SK-N-SH (cell line): ENCODE measurements at regions of chr3 and their contacts with region 1.

Region 1: GRCh38 chr3:141452036-141452435 is 34.8 kb upstream of the RASA2 start:
- DNase-seq: no peak
- H3K4me3 ChIP-seq: no peak overlapping the region
- H3K27ac ChIP-seq: no peak overlapping the region
- H3K4me1 ChIP-seq: peaks cover 4 to 16% of the 10 kb centered on the region in 2 experiments; a peak in 2 of 4 replicates
- H3K27me3 ChIP-seq: no peaks in the 10 kb centered on the region
- CTCF ChIP-seq: peak; percentile 80
- EP300 ChIP-seq: no peak
- RAD21 ChIP-seq: peak; percentile 84

Region 2: GRCh38 chr3:141212555-141212954 is 239.5 kb before region 1 on chr3:
- CTCF ChIA-PET with region 1: no interaction called
- POLR2A ChIA-PET with region 1: no interaction called
- DNase-seq: no peak
- H3K4me3 ChIP-seq: no peak overlapping the region
- H3K27ac ChIP-seq: no peak overlapping the region
- H3K4me1 ChIP-seq: no peaks in the 10 kb centered on the region
- H3K27me3 ChIP-seq: no peaks in the 10 kb centered on the region
- CTCF ChIP-seq: no peak
- EP300 ChIP-seq: no peak
- RAD21 ChIP-seq: no peak

Region 3: DNA sequence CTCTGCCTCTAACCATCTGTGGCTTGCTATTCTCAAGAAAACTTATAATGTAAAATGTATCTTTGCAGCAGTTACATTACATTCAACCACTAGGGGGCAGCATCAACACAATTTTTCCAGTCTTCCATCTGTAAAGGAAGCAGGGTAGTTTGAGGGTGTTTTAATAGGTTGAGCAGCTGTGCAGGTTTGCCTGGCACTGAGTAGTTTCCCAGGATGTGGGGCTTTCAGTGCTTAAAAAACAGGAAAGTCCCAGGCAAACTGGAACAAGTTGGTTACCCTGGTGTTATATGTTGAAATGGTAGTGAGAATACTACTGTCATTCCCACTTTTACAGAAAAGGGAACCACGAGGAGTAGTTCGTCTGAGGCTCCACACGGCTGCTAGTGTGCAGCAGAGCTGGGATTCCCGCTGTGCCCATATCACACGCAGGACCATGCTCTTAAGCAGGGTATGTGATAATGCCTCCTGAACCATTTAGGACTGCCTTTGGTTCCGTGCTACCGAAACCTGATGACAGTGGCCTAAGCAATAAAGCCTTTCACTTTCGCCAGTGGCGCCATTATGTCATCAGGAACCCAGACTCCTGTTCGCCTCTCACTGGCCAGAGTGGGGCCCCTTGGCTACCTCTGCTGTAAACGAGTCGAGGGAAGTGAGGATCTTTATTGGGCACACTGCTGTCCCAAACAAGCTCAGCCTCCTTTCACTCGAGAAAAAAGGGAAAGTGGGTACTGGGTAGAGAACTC is 148.4 kb before region 1 on chr3:
- CTCF ChIA-PET with region 1: interaction called, 28 read pairs
- POLR2A ChIA-PET with region 1: no interaction called
- DNase-seq: peak; percentile 66
- H3K4me3 ChIP-seq: no peak overlapping the region; a peak in 1 of 4 replicates
- H3K27ac ChIP-seq: no peak overlapping the region
- H3K4me1 ChIP-seq: no peaks in the 10 kb centered on the region; a peak in 1 of 4 replicates
- H3K27me3 ChIP-seq: no peaks in the 10 kb centered on the region
- CTCF ChIP-seq: peak; percentile 89
- EP300 ChIP-seq: no peak
- RAD21 ChIP-seq: peak; percentile 75

Region 4: DNA sequence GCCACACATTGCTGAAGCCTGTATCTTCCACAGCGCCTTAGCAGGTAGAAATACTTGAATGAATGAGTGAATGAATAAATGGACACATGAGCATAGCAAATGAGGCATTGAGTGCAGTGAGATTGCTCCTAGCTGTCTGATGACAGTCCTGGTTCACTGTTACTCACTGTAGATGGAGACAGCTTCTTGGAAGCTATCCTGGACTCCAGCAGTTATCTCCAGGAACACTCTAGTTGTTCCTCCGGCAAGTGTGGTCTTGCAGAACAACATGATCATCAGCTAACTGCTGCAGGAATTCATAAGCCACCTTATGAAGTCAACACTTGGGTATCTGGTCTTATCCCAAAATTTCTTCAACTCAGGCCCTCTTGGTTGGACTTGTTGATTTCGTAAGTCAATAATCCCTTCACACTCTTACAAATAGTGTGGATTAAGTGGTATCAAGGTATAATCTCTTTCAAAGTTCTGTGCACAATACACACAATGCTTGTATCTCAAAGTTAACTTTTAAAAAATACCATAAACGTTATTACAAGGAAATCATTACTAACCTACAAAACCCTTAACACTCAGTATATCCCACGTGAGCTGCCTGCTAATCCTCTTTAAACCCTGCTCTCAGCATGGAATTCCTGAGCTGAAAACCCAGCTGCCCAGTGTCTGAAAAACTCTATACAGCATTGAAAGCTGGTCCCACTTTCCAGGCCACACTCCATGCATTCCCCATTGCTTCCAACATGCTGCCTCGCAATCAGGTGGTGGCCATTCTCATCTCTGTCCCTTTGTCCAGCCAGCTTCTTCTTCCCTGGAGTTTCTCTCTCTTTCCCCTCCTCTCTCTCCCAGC is 98.2 kb before region 1 on chr3:
- CTCF ChIA-PET with region 1: interaction called, 123 read pairs
- POLR2A ChIA-PET with region 1: no interaction called
- DNase-seq: no peak
- H3K4me3 ChIP-seq: no peak overlapping the region
- H3K27ac ChIP-seq: no peak overlapping the region
- H3K4me1 ChIP-seq: no peaks in the 10 kb centered on the region
- H3K27me3 ChIP-seq: no peaks in the 10 kb centered on the region
- CTCF ChIP-seq: no peak
- EP300 ChIP-seq: no peak
- RAD21 ChIP-seq: no peak

Region 5: DNA sequence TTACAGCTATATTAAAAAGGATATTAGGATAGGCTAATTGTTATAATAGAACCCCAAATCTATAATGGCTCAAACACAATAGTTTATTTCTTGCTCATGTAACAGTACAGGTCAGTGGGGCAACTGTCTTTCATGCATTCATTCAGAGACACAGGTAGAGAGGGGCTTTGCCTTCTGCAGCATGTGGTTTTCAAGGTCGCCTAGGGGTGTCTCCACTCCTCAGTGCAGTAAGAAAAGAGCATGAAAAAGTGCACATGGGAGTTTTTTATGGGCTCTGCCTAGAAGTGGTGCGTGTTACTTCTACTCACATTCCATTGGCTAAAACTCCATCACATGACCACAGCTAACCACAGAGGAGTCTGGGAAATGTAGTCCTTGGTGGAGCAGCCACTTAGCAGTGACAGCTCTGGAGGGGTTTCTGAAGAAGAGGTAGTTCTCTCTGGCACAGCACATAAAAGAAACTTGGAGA is 81.9 kb before region 1 on chr3:
- CTCF ChIA-PET with region 1: interaction called, 19 read pairs
- POLR2A ChIA-PET with region 1: no interaction called
- DNase-seq: peak; percentile 80
- H3K4me3 ChIP-seq: peak overlapping the region in 1 of 2 experiments; percentile 3; a peak in 1 of 4 replicates
- H3K27ac ChIP-seq: peak overlapping the region; percentile 40 to 99; a peak in 3 of 4 replicates
- H3K4me1 ChIP-seq: peaks cover 9 to 33% of the 10 kb centered on the region in 2 experiments
- H3K27me3 ChIP-seq: no peaks in the 10 kb centered on the region
- CTCF ChIP-seq: peak; percentile 52
- EP300 ChIP-seq: no peak
- RAD21 ChIP-seq: peak; percentile 66

Region 6: DNA sequence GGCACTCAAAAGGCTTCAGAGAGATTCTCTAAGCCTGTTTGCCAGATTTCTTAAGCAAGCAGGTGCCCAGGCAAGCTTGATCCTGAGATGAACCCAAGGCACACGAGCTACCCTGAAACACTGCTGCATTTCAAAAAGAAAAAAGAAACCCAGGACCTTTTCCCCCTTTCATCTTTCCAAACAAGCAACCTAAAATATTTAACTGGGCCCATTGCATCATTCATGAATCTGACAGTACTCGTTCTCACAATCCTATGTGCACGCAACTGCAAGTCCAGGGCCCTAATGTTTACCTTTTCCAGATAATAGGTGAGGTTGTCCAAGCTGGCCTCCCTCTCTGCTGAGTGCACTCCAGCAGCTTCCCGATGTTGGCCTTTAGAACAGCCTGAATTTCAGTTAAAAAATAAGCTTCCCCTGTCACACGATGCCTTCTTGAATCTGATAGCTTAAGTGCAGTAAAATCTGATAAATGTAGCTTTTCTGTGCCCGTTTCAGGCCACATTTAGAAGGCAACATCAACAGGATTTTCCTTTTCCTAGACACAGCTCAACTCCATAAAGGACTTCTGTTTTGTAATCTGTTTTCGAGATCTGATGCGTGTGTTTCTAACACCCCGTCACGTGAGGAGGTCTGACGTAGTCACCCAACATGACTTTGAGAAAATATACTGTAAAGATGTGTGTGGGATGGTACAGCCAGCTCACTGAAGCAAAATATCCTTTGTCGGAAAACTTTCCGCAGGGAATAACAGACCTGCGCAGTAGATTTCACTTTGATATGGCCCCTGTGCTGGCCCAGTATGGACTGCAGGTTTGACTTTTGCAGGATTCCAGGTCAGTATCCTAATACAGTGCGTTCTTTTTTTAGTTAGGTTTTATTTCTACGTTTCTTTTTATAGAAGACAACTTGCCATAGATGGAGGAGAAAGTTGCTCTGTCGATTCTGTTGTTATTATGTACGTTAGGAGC is 20.3 kb before region 1 on chr3:
- CTCF ChIA-PET with region 1: interaction called, 16 read pairs
- POLR2A ChIA-PET with region 1: no interaction called
- DNase-seq: no peak
- H3K4me3 ChIP-seq: no peak overlapping the region
- H3K27ac ChIP-seq: no peak overlapping the region
- H3K4me1 ChIP-seq: peaks cover 6 to 13% of the 10 kb centered on the region in 2 experiments; a peak in 1 of 4 replicates
- H3K27me3 ChIP-seq: no peaks in the 10 kb centered on the region
- CTCF ChIP-seq: no peak
- EP300 ChIP-seq: no peak
- RAD21 ChIP-seq: no peak

Region 7: DNA sequence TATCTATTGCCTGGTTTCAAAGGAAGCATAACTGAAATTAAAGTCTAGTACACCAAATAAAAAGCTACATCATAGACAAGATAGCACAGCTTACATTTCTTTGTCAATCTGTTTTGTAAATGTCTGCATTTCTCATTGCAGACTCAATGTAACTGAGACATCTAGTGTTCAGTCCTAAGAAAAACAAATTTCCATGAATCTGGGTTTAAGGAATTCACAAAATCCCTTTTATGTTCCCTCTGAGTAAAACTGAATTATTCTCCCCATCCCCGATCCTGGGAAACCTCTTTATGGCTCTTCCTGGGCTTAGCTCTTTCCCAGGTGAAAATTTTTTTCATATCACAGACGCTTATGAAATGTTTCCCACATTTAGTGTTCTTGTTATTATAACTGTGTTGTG is 13.2 kb after region 1 on chr3:
- CTCF ChIA-PET with region 1: interaction called, 18 read pairs
- POLR2A ChIA-PET with region 1: no interaction called
- DNase-seq: peak; percentile 24
- H3K4me3 ChIP-seq: no peak overlapping the region
- H3K27ac ChIP-seq: no peak overlapping the region
- H3K4me1 ChIP-seq: no peaks in the 10 kb centered on the region
- H3K27me3 ChIP-seq: no peaks in the 10 kb centered on the region
- CTCF ChIP-seq: peak; percentile 44
- EP300 ChIP-seq: no peak
- RAD21 ChIP-seq: peak; percentile 65

Region 8: DNA sequence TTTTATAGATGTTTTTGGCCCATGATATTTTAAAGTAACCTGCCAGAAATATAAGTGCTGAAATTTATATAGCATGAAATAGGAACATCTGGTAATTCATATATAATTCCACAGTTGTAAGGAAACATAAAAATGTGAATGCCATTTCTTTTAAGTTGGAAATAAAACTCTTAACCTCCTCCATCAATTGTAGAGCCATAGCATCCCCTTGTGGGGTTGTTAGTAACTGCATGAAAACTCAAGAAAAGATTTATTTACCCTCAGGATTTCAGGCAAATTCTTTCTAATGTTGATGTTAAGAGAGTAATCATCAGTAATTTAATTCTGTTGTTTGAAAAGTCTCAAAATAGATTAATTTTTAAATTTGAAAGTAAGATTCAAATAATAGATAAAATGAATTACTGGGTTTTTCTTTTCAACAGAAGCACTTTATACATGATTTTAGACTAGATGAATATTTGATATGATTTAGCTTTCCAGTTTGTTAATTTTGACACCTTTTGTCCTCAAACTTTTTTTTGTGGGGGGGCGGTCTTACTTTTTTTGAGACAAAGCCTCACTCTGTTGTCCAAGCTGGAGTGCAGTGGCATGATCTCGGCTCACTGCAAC is 109.5 kb after region 1 on chr3:
- CTCF ChIA-PET with region 1: interaction called, 10 read pairs
- POLR2A ChIA-PET with region 1: no interaction called
- DNase-seq: peak; percentile 47
- H3K4me3 ChIP-seq: no peak overlapping the region; a peak in 1 of 4 replicates
- H3K27ac ChIP-seq: no peak overlapping the region
- H3K4me1 ChIP-seq: peaks cover 0 to 18% of the 10 kb centered on the region in 2 experiments; a peak in 1 of 4 replicates
- H3K27me3 ChIP-seq: no peaks in the 10 kb centered on the region
- CTCF ChIP-seq: peak; percentile 99
- EP300 ChIP-seq: no peak
- RAD21 ChIP-seq: peak; percentile 98